Gastrocnemius medialis (tissue), 4 donors: ENCODE measurements at regions of chr18 and their contacts with region 1.

Region 1: GRCh38 chr18:78021196-78021595 is 771.5 kb downstream of the GALR1 start:
- DNase-seq: no peak
- ATAC-seq: no peak
- H3K4me3 ChIP-seq: no peak overlapping the region
- H3K27ac ChIP-seq: no peak overlapping the region
- H3K4me1 ChIP-seq: no peaks in the 10 kb centered on the region
- H3K27me3 ChIP-seq: no peaks in the 10 kb centered on the region
- CTCF ChIP-seq: no peak
- POLR2A ChIP-seq: no peak

Region 2: GRCh38 chr18:77765468-77765867 is 255.7 kb before region 1 on chr18:
- in situ Hi-C with region 1: no loop called
- intact Hi-C with region 1: no loop called
- DNase-seq: no peak
- ATAC-seq: no peak
- H3K4me3 ChIP-seq: no peak overlapping the region
- H3K27ac ChIP-seq: no peak overlapping the region
- H3K4me1 ChIP-seq: no peaks in the 10 kb centered on the region
- H3K27me3 ChIP-seq: no peaks in the 10 kb centered on the region
- CTCF ChIP-seq: peak in 1 of 5 experiments; percentile 27
- POLR2A ChIP-seq: no peak

Region 3: DNA sequence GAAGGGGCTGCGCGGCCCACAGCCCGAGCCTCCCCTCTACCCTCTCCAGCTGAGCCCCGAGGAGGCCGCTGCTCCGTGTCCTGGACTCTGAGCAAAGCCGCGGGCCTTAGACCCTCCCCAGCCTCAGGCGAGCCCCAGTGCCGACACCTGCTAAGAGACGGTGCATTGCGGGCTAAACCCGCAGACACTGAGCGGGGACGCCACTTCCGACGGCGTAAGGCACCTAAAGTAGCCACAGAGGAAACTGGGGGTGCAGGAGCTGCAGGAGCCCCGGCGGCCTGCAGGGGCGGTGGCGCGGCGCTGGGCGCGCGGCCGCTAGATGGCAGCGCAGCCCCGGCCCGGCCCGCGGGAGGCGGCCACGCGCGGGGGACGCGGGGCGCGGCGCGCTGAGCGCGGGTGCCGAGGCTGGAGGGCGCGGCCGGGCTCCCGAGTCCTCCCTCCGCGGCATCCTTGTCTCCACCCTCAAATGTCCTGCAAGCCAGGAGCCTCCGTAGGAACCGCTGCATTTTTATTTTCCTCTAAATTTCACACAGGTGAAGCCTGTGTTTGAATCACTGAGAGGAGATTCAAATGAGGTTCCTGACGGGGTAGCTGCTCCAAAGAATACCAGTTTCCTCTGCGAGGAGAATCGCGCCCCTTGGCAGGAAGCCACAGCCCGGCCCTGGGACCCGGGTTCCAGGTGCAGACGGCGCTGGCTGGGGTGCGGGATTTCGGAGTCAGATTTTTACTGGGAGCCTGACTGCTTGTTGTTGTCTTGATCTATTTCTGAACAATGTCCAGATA is 121.0 kb before region 1 on chr18:
- in situ Hi-C with region 1: no loop called
- intact Hi-C with region 1: no loop called
- DNase-seq: no peak
- ATAC-seq: no peak
- H3K4me3 ChIP-seq: peak overlapping the region in 2 of 4 donors; percentile 22 to 26
- H3K27ac ChIP-seq: no peak overlapping the region
- H3K4me1 ChIP-seq: no peaks in the 10 kb centered on the region
- H3K27me3 ChIP-seq: peaks cover 0 to 3% (median 3%) of the 10 kb centered on the region in 3 donors
- CTCF ChIP-seq: peak; percentile 35 to 55 (median 47)
- POLR2A ChIP-seq: no peak

Region 4: GRCh38 chr18:77970814-77971213 is 50.4 kb before region 1 on chr18:
- in situ Hi-C with region 1: no loop called
- intact Hi-C with region 1: loop called (anchors 10 kb)
- DNase-seq: no peak
- ATAC-seq: no peak
- H3K4me3 ChIP-seq: no peak overlapping the region
- H3K27ac ChIP-seq: no peak overlapping the region
- H3K4me1 ChIP-seq: no peaks in the 10 kb centered on the region
- H3K27me3 ChIP-seq: no peaks in the 10 kb centered on the region
- CTCF ChIP-seq: no peak
- POLR2A ChIP-seq: no peak